ENCODE measurements at regions of chr1 and their contacts with region 1.

Region 1: GRCh38 chr1:42380586-42381279 is at the start of gene RIMKLA:
- DNase-seq: peak; percentile 53
- H3K4me3 Mint-ChIP-seq: peak within 1 kb of the TSS; percentile 85
- H3K27ac Mint-ChIP-seq: peak within 1 kb of the TSS; percentile 49
- H3K4me1 Mint-ChIP-seq: peaks cover 22% of the 10 kb centered on the region
- H3K27me3 Mint-ChIP-seq: peaks cover 25% of the 10 kb centered on the region
- total RNA-seq, gene RIMKLA: 3.3 and 4.8 TPM in 2 replicates

Region 2: DNA sequence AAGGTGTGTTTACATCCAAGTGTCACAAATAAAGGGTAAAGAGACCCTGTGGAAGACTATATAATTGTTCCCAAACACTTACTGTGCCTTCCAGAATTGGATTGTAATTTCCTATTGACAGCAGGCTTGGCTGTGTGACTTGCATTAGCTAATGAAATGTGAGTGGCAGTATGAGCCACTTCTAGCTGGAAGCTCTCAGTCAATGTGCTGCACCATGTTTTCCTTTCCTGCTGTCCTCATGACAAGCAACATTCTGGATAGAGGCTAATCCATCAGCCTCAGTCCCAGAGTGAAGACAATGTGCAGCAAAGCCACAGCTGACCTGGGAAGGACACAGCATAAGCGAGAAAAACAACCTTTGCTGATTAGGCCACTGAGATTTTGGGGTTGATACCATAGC is 39.8 kb before region 1 on chr1:
- intact Hi-C with region 1: no loop called
- DNase-seq: no peak
- H3K4me3 Mint-ChIP-seq: no peak overlapping the region
- H3K27ac Mint-ChIP-seq: no peak overlapping the region
- H3K4me1 Mint-ChIP-seq: peaks cover 12% of the 10 kb centered on the region
- H3K27me3 Mint-ChIP-seq: peaks cover 5% of the 10 kb centered on the region

Region 3: GRCh38 chr1:42456010-42456758 is 75.5 kb after region 1 on chr1 and contains the starts of genes PPCS and ZMYND12:
- intact Hi-C with region 1: loop called (anchors 1 kb)
- DNase-seq: peak; percentile 87
- H3K4me3 Mint-ChIP-seq: peak within 1 kb of the TSS; percentile 95
- H3K27ac Mint-ChIP-seq: peak within 1 kb of the TSS; percentile 98
- H3K4me1 Mint-ChIP-seq: peaks cover 28% of the 10 kb centered on the region
- H3K27me3 Mint-ChIP-seq: no peaks in the 10 kb centered on the region
- total RNA-seq, gene PPCS: 40.1 and 48.0 TPM in 2 replicates
- total RNA-seq, gene ZMYND12: not detected in 2 replicates

Measured in activated T-helper 1 cell treated with anti-CD3 and anti-CD28 coated beads, Interleukin-12 subunit alpha, Interleukin-12 subunit beta, Interleukin-2, Interleukin-4 antibody, amounts not matched to agents 30 ng/mL and 10 ng/mL and 1 ng/mL, durations not matched to agents 14 hours and 24 hours and 36 hours (primary cell).